ENCODE measurements at regions of chr18 and their contacts with region 1.

Region 1: GRCh38 chr18:30676053-30676480 is 366.5 kb downstream of the DSC3 start:
- DNase-seq: peak; percentile 52 to 93 (median 66)
- ATAC-seq: peak; percentile 90
- H3K4me3 ChIP-seq: no peak overlapping the region
- H3K27ac ChIP-seq: peak overlapping the region; percentile 85
- H3K4me1 ChIP-seq: peaks cover 0 to 20% of the 10 kb centered on the region in 2 experiments; a peak in 3 of 5 replicates
- H3K27me3 ChIP-seq: no peaks in the 10 kb centered on the region
- CTCF ChIP-seq: no peak
- EP300 ChIP-seq: peak; percentile 94
- POLR2A ChIP-seq: no peak
- RAD21 ChIP-seq: peak; percentile 22 to 57; a peak in 2 of 4 replicates

Region 2: DNA sequence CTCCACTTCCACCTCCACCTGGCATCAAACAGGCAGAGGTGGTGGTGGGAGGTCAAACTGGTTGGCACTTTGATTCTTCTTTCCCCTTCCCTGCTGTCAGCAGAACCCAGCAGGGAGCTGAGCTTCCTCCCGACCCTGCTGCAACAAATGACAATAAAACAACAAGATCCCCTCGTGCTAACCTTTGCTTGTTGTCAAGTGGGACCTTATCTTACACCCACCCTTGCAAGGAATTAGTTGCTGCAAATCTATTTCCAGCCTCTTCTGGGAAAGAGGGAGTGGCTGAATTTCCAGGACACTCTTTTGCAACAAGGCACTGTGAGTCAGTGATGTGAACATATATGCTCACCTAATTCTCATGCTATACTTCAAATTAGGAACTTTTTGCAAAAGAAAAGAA is 288.7 kb before region 1 on chr18:
- CTCF ChIA-PET with region 1: no interaction called
- POLR2A ChIA-PET with region 1: no interaction called
- in situ Hi-C with region 1: no loop called
- intact Hi-C with region 1: loop called (anchors 10 kb)
- DNase-seq: peak in 2 of 4 experiments; percentile 30 to 80
- ATAC-seq: peak; percentile 25
- H3K4me3 ChIP-seq: no peak overlapping the region
- H3K27ac ChIP-seq: no peak overlapping the region
- H3K4me1 ChIP-seq: no peaks in the 10 kb centered on the region
- H3K27me3 ChIP-seq: no peaks in the 10 kb centered on the region
- CTCF ChIP-seq: no peak
- EP300 ChIP-seq: no peak
- POLR2A ChIP-seq: no peak
- RAD21 ChIP-seq: no peak

Region 3: GRCh38 chr18:30439174-30439573 is 236.9 kb before region 1 on chr18:
- CTCF ChIA-PET with region 1: no interaction called
- POLR2A ChIA-PET with region 1: no interaction called
- in situ Hi-C with region 1: no loop called
- intact Hi-C with region 1: loop called (anchors 5 kb)
- DNase-seq: peak; percentile 10 to 76 (median 28)
- ATAC-seq: peak; percentile 84
- H3K4me3 ChIP-seq: no peak overlapping the region
- H3K27ac ChIP-seq: no peak overlapping the region; the same call in 2 of the 3 replicates
- H3K4me1 ChIP-seq: no peaks in the 10 kb centered on the region; a peak in 1 of 5 replicates
- H3K27me3 ChIP-seq: no peaks in the 10 kb centered on the region
- CTCF ChIP-seq: no peak
- EP300 ChIP-seq: no peak
- POLR2A ChIP-seq: no peak
- RAD21 ChIP-seq: no peak

Region 4: GRCh38 chr18:30457156-30457555 is 218.9 kb before region 1 on chr18:
- CTCF ChIA-PET with region 1: no interaction called
- POLR2A ChIA-PET with region 1: no interaction called
- in situ Hi-C with region 1: no loop called
- intact Hi-C with region 1: loop called (anchors 5 kb)
- DNase-seq: peak in 2 of 4 experiments; percentile 9 to 47
- ATAC-seq: peak; percentile 62; the same call in 2 of the 3 replicates
- H3K4me3 ChIP-seq: no peak overlapping the region
- H3K27ac ChIP-seq: no peak overlapping the region
- H3K4me1 ChIP-seq: no peaks in the 10 kb centered on the region
- H3K27me3 ChIP-seq: no peaks in the 10 kb centered on the region
- CTCF ChIP-seq: peak in 1 of 3 experiments; percentile 2; a peak in 1 of 6 replicates
- EP300 ChIP-seq: no peak
- POLR2A ChIP-seq: no peak
- RAD21 ChIP-seq: peak in 1 of 2 experiments; percentile 26; a peak in 1 of 4 replicates

Region 5: GRCh38 chr18:30582078-30582477 is 94.0 kb before region 1 on chr18:
- CTCF ChIA-PET with region 1: no interaction called
- POLR2A ChIA-PET with region 1: no interaction called
- in situ Hi-C with region 1: no loop called
- intact Hi-C with region 1: no loop called
- DNase-seq: peak in 2 of 4 experiments; percentile 14 to 31
- ATAC-seq: peak; percentile 71
- H3K4me3 ChIP-seq: no peak overlapping the region
- H3K27ac ChIP-seq: no peak overlapping the region
- H3K4me1 ChIP-seq: no peaks in the 10 kb centered on the region
- H3K27me3 ChIP-seq: no peaks in the 10 kb centered on the region
- CTCF ChIP-seq: no peak
- EP300 ChIP-seq: no peak
- POLR2A ChIP-seq: no peak
- RAD21 ChIP-seq: no peak

Region 6: GRCh38 chr18:30852980-30853379 is 176.9 kb after region 1 on chr18:
- CTCF ChIA-PET with region 1: no interaction called
- POLR2A ChIA-PET with region 1: no interaction called
- in situ Hi-C with region 1: no loop called
- intact Hi-C with region 1: loop called (anchors 10 kb)
- DNase-seq: no peak
- ATAC-seq: no peak
- H3K4me3 ChIP-seq: no peak overlapping the region
- H3K27ac ChIP-seq: no peak overlapping the region
- H3K4me1 ChIP-seq: no peaks in the 10 kb centered on the region
- H3K27me3 ChIP-seq: no peaks in the 10 kb centered on the region
- CTCF ChIP-seq: no peak
- EP300 ChIP-seq: no peak
- POLR2A ChIP-seq: no peak
- RAD21 ChIP-seq: no peak

Region 7: GRCh38 chr18:30889519-30890301 is 213.6 kb after region 1 on chr18:
- CTCF ChIA-PET with region 1: no interaction called
- POLR2A ChIA-PET with region 1: no interaction called
- in situ Hi-C with region 1: no loop called
- intact Hi-C with region 1: loop called (anchors 10 kb)
- DNase-seq: peak in 1 of 4 experiments; percentile 60
- ATAC-seq: peak; percentile 78
- H3K4me3 ChIP-seq: no peak overlapping the region
- H3K27ac ChIP-seq: no peak overlapping the region
- H3K4me1 ChIP-seq: no peaks in the 10 kb centered on the region
- H3K27me3 ChIP-seq: no peaks in the 10 kb centered on the region
- CTCF ChIP-seq: peak; percentile 47 to 64 (median 62); a peak in 5 of 6 replicates
- EP300 ChIP-seq: no peak
- POLR2A ChIP-seq: no peak
- RAD21 ChIP-seq: peak; percentile 82 to 83

Measured in K562 (cell line).